ENCODE measurements at regions of chr3 and their contacts with region 1.

Region 1: GRCh38 chr3:98817547-98818041 is 54.5 kb downstream of the ST3GAL6 start:
- DNase-seq: no peak
- ATAC-seq: peak; percentile 80
- H3K4me3 ChIP-seq: no peak overlapping the region
- H3K27ac ChIP-seq: no peak overlapping the region
- H3K4me1 ChIP-seq: peaks cover 0 to 12% of the 10 kb centered on the region in 2 experiments; a peak in 2 of 4 replicates
- H3K27me3 ChIP-seq: no peaks in the 10 kb centered on the region
- CTCF ChIP-seq: peak; percentile 54 to 87 (median 59); a peak in 5 of 6 replicates
- POLR2A ChIP-seq: no peak
- RAD21 ChIP-seq: peak; percentile 79

Region 2: GRCh38 chr3:98329392-98330124 is 488.0 kb before region 1 on chr3:
- CTCF ChIA-PET with region 1: no interaction called
- POLR2A ChIA-PET with region 1: no interaction called
- RAD21 ChIA-PET with region 1: no interaction called
- intact Hi-C with region 1: loop called (anchors 10 kb)
- DNase-seq: peak; percentile 33
- ATAC-seq: peak; percentile 80
- H3K4me3 ChIP-seq: no peak overlapping the region
- H3K27ac ChIP-seq: no peak overlapping the region
- H3K4me1 ChIP-seq: peaks cover 0 to 11% of the 10 kb centered on the region in 2 experiments; a peak in 2 of 4 replicates
- H3K27me3 ChIP-seq: 0 out of 2 replicates have a peak, but pooled peaks cover 4% of the 10 kb centered on the region
- CTCF ChIP-seq: peak; percentile 70 to 80 (median 77)
- POLR2A ChIP-seq: no peak
- RAD21 ChIP-seq: peak; percentile 81

Region 3: DNA sequence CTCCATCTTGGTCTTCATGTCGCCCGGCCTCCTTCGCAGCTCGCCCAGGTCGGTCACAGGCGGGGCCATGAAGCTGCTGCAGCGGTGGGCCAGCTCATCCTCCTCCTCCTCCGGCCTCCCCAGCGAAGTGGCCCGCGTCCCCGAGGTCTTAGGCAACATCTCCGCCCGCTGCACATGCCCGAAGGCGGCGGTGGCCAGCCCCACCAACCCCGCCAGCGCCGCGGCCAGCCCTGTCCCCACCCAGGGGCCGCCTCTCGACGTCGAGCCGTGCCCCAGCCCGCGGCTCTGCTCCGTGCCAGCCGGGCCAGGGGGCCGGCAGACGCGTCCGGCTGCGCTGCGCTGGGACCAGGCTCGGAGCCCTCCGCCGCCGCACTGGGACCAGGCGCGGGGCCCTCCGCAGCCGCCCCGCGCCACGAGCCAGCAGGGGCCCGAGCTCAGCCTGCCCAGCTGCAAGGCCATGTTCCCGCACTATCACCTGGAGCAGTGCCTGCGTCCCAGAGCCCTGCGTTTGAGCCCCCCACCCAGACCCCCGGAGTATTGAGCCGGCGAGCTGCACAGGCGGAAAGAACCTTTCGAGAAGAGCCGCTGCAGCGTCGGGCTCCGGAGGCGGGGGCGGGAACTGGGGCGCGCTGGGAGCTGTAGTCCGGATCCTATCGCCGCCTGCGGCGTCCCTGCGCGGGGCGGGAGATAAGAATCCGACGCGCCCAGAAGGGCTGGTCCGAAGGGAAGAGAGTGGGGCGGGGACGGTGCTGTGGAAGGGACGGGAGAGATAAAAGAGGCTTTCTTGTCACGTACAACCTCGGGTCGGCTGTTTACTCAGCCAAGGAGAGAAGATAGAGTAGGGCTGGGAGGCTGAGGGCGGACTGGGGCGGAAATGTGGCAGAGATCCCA is 224.3 kb before region 1 on chr3 and contains the start of gene CPOX:
- CTCF ChIA-PET with region 1: interaction called, 48 read pairs
- POLR2A ChIA-PET with region 1: interaction called, 5 read pairs
- RAD21 ChIA-PET with region 1: no interaction called
- intact Hi-C with region 1: no loop called
- DNase-seq: peak; percentile 89
- ATAC-seq: peak; percentile 96
- H3K4me3 ChIP-seq: peak within 1 kb of the TSS; percentile 77 to 83
- H3K27ac ChIP-seq: peak within 1 kb of the TSS; percentile 93
- H3K4me1 ChIP-seq: peaks cover 48 to 60% of the 10 kb centered on the region in 2 experiments
- H3K27me3 ChIP-seq: no peaks in the 10 kb centered on the region
- CTCF ChIP-seq: no peak
- POLR2A ChIP-seq: peak; percentile 82
- RAD21 ChIP-seq: no peak
- total RNA-seq, gene CPOX: 353 TPM

Region 4: DNA sequence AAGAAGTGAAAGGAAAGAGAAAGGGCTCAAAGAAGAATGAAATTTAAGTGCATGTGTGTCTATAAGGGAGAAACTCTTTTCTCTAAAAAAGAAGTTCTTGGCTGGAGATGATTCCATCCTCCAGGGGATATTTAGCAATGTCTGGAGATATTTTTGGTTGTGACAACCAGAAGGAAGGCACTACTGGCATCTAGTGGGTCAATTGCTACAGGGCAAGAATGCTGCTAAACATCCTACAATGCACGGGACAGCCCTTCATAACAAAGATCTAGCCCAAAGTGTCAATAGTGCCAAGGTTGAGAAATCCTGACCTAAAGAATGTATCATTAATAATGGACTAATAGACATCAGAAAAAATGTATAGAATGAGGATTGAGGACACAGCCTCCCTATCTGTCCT is 111.9 kb before region 1 on chr3:
- CTCF ChIA-PET with region 1: no interaction called
- POLR2A ChIA-PET with region 1: no interaction called
- RAD21 ChIA-PET with region 1: no interaction called
- intact Hi-C with region 1: no loop called
- DNase-seq: no peak
- ATAC-seq: peak; percentile 50; the same call in 1 of the 2 replicates
- H3K4me3 ChIP-seq: no peak overlapping the region
- H3K27ac ChIP-seq: no peak overlapping the region
- H3K4me1 ChIP-seq: no peaks in the 10 kb centered on the region
- H3K27me3 ChIP-seq: no peaks in the 10 kb centered on the region
- CTCF ChIP-seq: peak; percentile 19 to 36 (median 29); a peak in 3 of 6 replicates
- POLR2A ChIP-seq: no peak
- RAD21 ChIP-seq: peak; percentile 46

Region 5: DNA sequence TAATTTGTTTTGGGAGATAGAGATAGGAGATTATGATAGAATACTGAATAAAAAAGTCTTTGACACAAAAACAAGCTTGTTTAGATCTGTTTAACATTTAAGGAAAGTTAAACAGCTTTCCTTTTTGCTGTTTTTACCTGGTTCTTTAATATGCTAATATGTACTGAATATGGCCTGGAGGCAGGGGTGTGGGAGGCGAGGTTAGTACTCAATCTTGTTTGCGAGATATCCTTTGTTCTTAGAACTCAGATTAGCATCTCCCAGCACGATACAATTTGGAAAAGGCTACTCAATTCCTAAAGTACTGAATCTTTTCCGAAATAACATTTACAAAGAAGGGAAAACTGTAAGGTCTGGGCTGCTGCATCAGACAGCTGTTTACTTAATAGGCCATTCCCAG is 95.2 kb before region 1 on chr3:
- CTCF ChIA-PET with region 1: no interaction called
- POLR2A ChIA-PET with region 1: no interaction called
- RAD21 ChIA-PET with region 1: no interaction called
- intact Hi-C with region 1: no loop called
- DNase-seq: no peak
- ATAC-seq: no peak
- H3K4me3 ChIP-seq: no peak overlapping the region
- H3K27ac ChIP-seq: no peak overlapping the region
- H3K4me1 ChIP-seq: no peaks in the 10 kb centered on the region
- H3K27me3 ChIP-seq: no peaks in the 10 kb centered on the region
- CTCF ChIP-seq: no peak
- POLR2A ChIP-seq: no peak
- RAD21 ChIP-seq: no peak

Region 6: GRCh38 chr3:98994128-98994762 is 176.7 kb after region 1 on chr3:
- CTCF ChIA-PET with region 1: interaction called, 19 read pairs
- POLR2A ChIA-PET with region 1: no interaction called
- RAD21 ChIA-PET with region 1: interaction called in 1 of 2 experiments, 3 read pairs
- intact Hi-C with region 1: loop called (anchors 2 kb)
- DNase-seq: peak; percentile 52
- ATAC-seq: peak; percentile 78
- H3K4me3 ChIP-seq: no peak overlapping the region
- H3K27ac ChIP-seq: no peak overlapping the region
- H3K4me1 ChIP-seq: peaks cover 0 to 16% of the 10 kb centered on the region in 2 experiments; a peak in 1 of 4 replicates
- H3K27me3 ChIP-seq: no peaks in the 10 kb centered on the region
- CTCF ChIP-seq: peak; percentile 59 to 84 (median 66); a peak in 5 of 6 replicates
- POLR2A ChIP-seq: no peak
- RAD21 ChIP-seq: peak; percentile 87

Region 7: GRCh38 chr3:99753268-99753975 is 935.8 kb after region 1 on chr3:
- CTCF ChIA-PET with region 1: interaction called, 3 read pairs
- POLR2A ChIA-PET with region 1: no interaction called
- RAD21 ChIA-PET with region 1: no interaction called
- intact Hi-C with region 1: loop called (anchors 5 kb)
- DNase-seq: peak; percentile 28
- ATAC-seq: peak; percentile 92
- H3K4me3 ChIP-seq: no peak overlapping the region
- H3K27ac ChIP-seq: no peak overlapping the region
- H3K4me1 ChIP-seq: no peaks in the 10 kb centered on the region
- H3K27me3 ChIP-seq: peaks cover 66% of the 10 kb centered on the region
- CTCF ChIP-seq: peak; percentile 37 to 76 (median 68); a peak in 5 of 6 replicates
- POLR2A ChIP-seq: no peak
- RAD21 ChIP-seq: peak; percentile 76

Region 8: DNA sequence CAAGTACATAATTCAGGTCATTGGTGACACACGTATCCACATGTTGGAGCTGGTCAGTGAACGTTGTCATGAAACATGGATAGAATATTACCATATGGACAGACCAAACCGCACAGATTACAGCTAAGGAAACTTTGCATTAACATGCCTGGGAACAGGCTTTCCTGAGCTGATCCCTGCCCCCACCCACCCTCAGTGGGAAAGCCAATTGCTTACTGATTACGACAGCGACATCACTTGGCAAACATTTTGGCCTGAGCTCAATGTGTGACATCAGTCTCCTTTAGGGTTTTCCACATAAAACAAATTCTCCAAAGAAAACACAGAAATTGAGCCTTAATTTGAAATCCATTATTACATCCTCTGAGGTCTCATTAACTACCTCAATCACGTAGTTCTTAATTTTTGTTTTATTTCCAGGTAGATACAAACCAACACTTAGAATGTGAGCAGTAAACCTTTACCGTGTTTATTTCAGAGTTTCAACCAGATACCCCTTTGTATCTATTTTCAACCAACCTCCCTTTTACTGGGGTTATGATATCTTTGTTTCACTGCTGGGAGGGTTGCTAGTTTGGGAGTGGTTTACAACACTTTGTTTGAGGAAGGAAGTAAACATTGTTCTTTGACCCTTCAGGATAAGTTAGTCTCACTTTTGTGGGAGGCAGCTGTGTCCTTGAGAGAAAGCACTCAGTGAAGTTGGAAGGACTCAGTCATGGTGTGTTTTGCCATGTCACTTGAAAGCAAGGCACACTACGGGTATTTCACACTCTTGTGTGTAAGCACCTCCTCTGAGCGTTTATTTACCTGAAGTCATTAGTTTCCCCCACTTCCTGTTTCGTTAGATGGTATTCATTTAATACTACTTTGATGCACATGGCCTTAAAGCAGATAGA is 1103.1 kb after region 1 on chr3:
- CTCF ChIA-PET with region 1: no interaction called
- POLR2A ChIA-PET with region 1: no interaction called
- RAD21 ChIA-PET with region 1: no interaction called
- intact Hi-C with region 1: no loop called
- DNase-seq: no peak
- ATAC-seq: no peak
- H3K4me3 ChIP-seq: no peak overlapping the region
- H3K27ac ChIP-seq: no peak overlapping the region
- H3K4me1 ChIP-seq: peaks cover 0 to 5% of the 10 kb centered on the region in 2 experiments; a peak in 2 of 4 replicates
- H3K27me3 ChIP-seq: no peaks in the 10 kb centered on the region
- CTCF ChIP-seq: no peak
- POLR2A ChIP-seq: no peak
- RAD21 ChIP-seq: no peak

Measured in HCT116 (cell line).